Ovary (tissue), 10 donors: ENCODE measurements at regions of chr7 and their contacts with region 1.

Region 1: DNA sequence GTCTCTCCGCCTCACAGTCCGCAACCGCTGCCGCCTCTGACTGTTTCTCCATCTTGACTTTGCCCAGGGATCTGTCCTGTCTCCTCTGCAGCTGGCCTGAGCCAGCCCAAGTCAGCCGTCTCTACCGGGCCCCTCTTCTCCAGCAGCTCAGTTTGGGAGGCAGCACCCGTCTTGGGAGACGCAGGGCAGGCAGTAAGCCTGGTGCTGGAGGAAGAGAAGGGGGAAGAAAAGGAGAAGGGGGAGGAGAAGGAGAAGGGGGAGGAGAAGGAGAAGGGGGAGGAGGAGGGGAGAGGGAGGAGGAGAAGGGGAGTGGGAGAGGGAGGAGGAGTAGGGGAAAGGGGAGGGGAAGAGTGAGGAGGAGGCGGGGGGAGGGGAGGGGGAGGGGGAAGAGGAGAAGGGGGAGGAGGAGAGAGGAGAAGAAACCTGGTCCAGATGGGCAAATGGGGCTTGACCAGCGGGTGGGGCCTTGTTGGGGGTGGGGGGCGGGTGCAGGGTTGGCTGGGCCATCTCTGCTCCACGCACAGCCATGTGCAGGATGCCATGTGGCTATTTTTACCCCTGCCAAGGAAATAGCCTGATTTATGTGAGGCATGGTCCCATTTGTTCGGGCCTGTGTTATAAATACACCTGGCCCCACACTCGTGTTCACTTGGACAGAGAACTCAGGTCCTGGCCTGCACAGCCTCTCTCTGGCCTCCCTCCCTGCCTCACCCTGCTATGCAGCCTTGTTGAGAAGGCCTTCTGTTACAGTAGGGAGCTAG is 35.9 kb upstream of the FZD9 start:
- DNase-seq: no peak
- H3K4me3 ChIP-seq: no peak overlapping the region
- H3K27ac ChIP-seq: no peak overlapping the region
- H3K4me1 ChIP-seq: peaks cover 2% of the 10 kb centered on the region
- H3K27me3 ChIP-seq: no peaks in the 10 kb centered on the region
- CTCF ChIP-seq: no peak
- EP300 ChIP-seq: no peak
- POLR2A ChIP-seq: no peak

Region 2: DNA sequence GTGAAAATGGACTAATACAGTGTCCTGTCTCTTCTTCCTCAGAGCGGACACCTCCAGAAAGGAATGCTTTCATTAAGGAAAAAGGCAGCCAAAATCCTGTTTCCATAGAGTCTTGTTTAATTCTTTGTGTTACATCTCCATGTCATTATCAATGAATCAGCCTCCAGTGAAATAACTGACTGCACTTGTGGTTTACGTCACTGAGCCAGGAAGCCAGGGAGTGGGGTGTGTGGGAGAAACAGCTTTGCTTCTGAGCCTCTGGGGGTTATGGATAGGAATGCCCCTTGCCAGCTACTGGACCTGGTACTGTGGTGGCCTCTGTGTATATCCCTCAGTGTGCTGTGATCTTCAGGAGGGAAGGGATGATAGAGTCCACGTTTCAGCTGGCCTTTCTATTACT is 1849.0 kb before region 1 on chr7:
- intact Hi-C with region 1: loop called in 1 of 4 experiments (anchors 5 kb)
- DNase-seq: no peak
- H3K4me3 ChIP-seq: no peak overlapping the region
- H3K27ac ChIP-seq: no peak overlapping the region
- H3K4me1 ChIP-seq: no peaks in the 10 kb centered on the region
- H3K27me3 ChIP-seq: no peaks in the 10 kb centered on the region
- CTCF ChIP-seq: no peak
- EP300 ChIP-seq: no peak
- POLR2A ChIP-seq: no peak

Region 3: GRCh38 chr7:73451780-73452398 is 54.2 kb after region 1 on chr7:
- intact Hi-C with region 1: no loop called
- DNase-seq: peak in 1 of 5 donors; percentile 38
- H3K4me3 ChIP-seq: no peak overlapping the region
- H3K27ac ChIP-seq: no peak overlapping the region
- H3K4me1 ChIP-seq: peaks cover 4% of the 10 kb centered on the region
- H3K27me3 ChIP-seq: no peaks in the 10 kb centered on the region
- CTCF ChIP-seq: peak; percentile 78 to 94 (median 92)
- EP300 ChIP-seq: no peak
- POLR2A ChIP-seq: no peak